ENCODE measurements at regions of chr15 and their contacts with region 1.

Region 1: GRCh38 chr15:74156678-74157411 is 16.7 kb upstream of the ISLR start:
- DNase-seq: peak in 2 of 10 donors; percentile 45 to 53
- H3K4me3 ChIP-seq: no peak overlapping the region
- H3K27ac ChIP-seq: peak overlapping the region in 55 of 59 donors; percentile 1 to 85 (median 69)
- H3K27me3 ChIP-seq: no peaks in the 10 kb centered on the region
- CTCF ChIP-seq: no peak

Region 2: GRCh38 chr15:74228723-74229081 is 71.9 kb after region 1 on chr15:
- intact Hi-C with region 1: loop called in 1 of 2 experiments (anchors 5 kb)
- DNase-seq: no peak
- H3K4me3 ChIP-seq: no peak overlapping the region
- H3K27ac ChIP-seq: peak overlapping the region in 9 of 59 donors; percentile 2 to 64 (median 41)
- H3K27me3 ChIP-seq: peaks cover 0 to 7% (median 0%) of the 10 kb centered on the region in 45 donors
- CTCF ChIP-seq: no peak

Region 3: DNA sequence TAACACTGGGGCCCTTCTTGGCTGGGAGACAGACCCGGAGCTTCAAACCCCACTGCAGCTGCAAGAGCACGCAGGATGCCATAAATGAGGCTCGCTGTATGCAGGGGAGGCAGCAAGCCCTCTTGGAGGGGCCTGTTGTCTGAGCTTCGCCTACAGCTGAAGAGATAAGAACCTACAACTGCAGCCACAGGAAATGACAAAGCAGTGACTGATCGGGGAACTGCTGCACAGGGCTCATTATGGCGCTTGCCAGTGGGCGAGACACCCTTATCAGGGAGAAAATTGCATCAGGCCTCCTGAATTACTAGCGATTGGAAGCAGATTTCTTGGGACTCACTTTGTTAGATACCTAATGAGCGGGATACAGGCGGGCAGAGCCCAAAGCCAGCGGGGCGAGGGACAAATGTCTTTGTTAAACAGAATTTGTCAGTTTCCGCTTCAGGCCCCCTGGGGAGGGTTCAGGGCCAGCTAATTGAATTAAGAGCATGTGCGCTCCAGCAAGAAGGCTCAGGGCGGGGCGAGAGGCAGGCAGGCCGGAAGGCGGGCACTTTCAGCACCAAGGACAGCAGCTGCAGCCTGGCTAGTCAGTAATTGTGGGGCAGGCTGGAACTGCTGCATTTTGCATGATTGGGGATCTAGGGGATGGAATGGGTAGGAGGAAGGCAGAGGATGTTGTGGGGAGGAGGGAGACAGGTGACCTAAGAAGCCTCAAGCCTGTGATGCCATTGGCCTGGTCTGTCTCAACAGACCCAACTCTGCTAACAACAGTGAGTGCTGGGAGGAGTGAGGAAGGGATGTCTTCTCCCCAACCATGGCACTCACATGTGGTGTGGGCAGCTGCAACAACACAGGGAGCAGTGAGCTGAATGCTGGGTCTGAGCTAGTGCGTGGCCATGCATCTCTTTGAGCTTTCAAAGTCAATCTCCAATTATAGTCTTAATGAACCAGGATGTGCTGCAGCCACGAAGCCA is 134.5 kb after region 1 on chr15:
- intact Hi-C with region 1: no loop called
- DNase-seq: peak in 9 of 10 donors; percentile 13 to 72 (median 53)
- H3K4me3 ChIP-seq: no peak overlapping the region
- H3K27ac ChIP-seq: no peak overlapping the region
- H3K27me3 ChIP-seq: no peaks in the 10 kb centered on the region
- CTCF ChIP-seq: peak in 11 of 56 donors; percentile 9 to 40 (median 23)

Measured in dorsolateral prefrontal cortex (tissue), 120 donors.